ENCODE measurements at regions of chr6 and their contacts with region 1.

Region 1: GRCh38 chr6:153231048-153231646 is 100.1 kb upstream of the RGS17 start:
- DNase-seq: peak in 1 of 9 donors; percentile 23
- ATAC-seq: peak; percentile 26
- H3K4me3 ChIP-seq: no peak overlapping the region
- H3K4me3 Mint-ChIP-seq: no peak overlapping the region
- H3K27ac ChIP-seq: no peak overlapping the region
- H3K27ac Mint-ChIP-seq: no peak overlapping the region
- H3K4me1 ChIP-seq: no peaks in the 10 kb centered on the region
- H3K4me1 Mint-ChIP-seq: no peaks in the 10 kb centered on the region
- H3K27me3 ChIP-seq: no peaks in the 10 kb centered on the region
- H3K27me3 Mint-ChIP-seq: peaks cover 0 to 6% (median 3%) of the 10 kb centered on the region in 5 donors

Region 2: DNA sequence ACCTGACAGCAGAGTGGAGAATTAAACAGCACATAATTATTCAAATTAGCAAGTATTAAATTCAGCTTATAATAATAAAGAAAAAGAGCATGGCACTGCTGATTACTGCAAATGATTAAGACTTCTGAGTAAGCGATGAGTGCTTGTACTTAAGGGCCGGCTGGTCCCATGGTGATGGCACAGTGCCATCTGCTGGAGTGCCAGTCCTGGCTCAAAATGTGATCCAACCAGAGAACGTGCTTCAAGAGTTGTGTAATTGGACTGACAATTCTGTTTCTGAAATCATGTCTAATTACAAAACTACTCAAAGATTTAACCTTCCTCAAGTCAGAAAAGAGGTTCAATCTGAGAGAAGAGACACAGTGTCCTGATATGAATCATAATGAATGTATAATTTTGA is 81.5 kb after region 1 on chr6:
- CTCF ChIA-PET with region 1: no interaction called
- POLR2A ChIA-PET with region 1: no interaction called
- intact Hi-C with region 1: loop called in 1 of 2 experiments (anchors 1 kb)
- DNase-seq: peak in 3 of 9 donors; percentile 2 to 36 (median 13)
- ATAC-seq: peak; percentile 45
- H3K4me3 ChIP-seq: no peak overlapping the region
- H3K4me3 Mint-ChIP-seq: no peak overlapping the region
- H3K27ac ChIP-seq: no peak overlapping the region
- H3K27ac Mint-ChIP-seq: no peak overlapping the region
- H3K4me1 ChIP-seq: no peaks in the 10 kb centered on the region
- H3K4me1 Mint-ChIP-seq: peaks cover 0 to 7% (median 0%) of the 10 kb centered on the region in 7 donors
- H3K27me3 ChIP-seq: no peaks in the 10 kb centered on the region
- H3K27me3 Mint-ChIP-seq: peaks cover 0 to 8% (median 4%) of the 10 kb centered on the region in 5 donors

Region 3: GRCh38 chr6:153511896-153512496 is 280.8 kb after region 1 on chr6:
- CTCF ChIA-PET with region 1: no interaction called
- POLR2A ChIA-PET with region 1: no interaction called
- intact Hi-C with region 1: loop called in 1 of 2 experiments (anchors 5 kb)
- DNase-seq: peak in 5 of 9 donors; percentile 1 to 27 (median 16)
- ATAC-seq: peak; percentile 49
- H3K4me3 ChIP-seq: no peak overlapping the region
- H3K4me3 Mint-ChIP-seq: peak overlapping the region in 1 of 10 donors; percentile 24
- H3K27ac ChIP-seq: no peak overlapping the region
- H3K27ac Mint-ChIP-seq: peak overlapping the region in 1 of 9 donors; percentile 49
- H3K4me1 ChIP-seq: no peaks in the 10 kb centered on the region
- H3K4me1 Mint-ChIP-seq: peaks cover 0 to 7% (median 2%) of the 10 kb centered on the region in 7 donors
- H3K27me3 ChIP-seq: no peaks in the 10 kb centered on the region
- H3K27me3 Mint-ChIP-seq: no peaks in the 10 kb centered on the region

Region 4: DNA sequence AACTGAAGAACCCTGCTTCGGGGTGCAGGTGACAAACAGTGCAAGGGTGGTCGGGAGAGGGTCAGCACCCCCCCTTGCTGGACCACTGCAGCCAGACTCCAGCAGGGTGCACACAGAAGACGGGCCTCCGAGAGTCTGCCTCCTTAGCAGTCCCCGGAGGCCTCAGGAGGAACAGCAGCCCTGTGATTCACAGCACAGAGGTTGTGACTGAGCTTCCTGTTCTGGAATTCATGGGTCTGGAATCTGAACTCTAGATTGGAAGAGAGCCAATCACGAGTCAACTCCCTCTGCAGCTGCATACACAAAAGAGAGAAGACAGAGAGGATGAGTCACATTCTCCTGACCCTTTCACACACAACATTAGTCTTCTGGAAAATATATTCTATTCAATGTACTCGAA is 558.9 kb after region 1 on chr6:
- CTCF ChIA-PET with region 1: no interaction called
- POLR2A ChIA-PET with region 1: no interaction called
- intact Hi-C with region 1: loop called in 1 of 2 experiments (anchors 2 kb)
- DNase-seq: no peak
- ATAC-seq: no peak
- H3K4me3 ChIP-seq: no peak overlapping the region
- H3K4me3 Mint-ChIP-seq: no peak overlapping the region
- H3K27ac ChIP-seq: no peak overlapping the region
- H3K27ac Mint-ChIP-seq: no peak overlapping the region
- H3K4me1 ChIP-seq: no peaks in the 10 kb centered on the region
- H3K4me1 Mint-ChIP-seq: no peaks in the 10 kb centered on the region
- H3K27me3 ChIP-seq: no peaks in the 10 kb centered on the region
- H3K27me3 Mint-ChIP-seq: peaks cover 0 to 10% (median 0%) of the 10 kb centered on the region in 5 donors

Region 5: DNA sequence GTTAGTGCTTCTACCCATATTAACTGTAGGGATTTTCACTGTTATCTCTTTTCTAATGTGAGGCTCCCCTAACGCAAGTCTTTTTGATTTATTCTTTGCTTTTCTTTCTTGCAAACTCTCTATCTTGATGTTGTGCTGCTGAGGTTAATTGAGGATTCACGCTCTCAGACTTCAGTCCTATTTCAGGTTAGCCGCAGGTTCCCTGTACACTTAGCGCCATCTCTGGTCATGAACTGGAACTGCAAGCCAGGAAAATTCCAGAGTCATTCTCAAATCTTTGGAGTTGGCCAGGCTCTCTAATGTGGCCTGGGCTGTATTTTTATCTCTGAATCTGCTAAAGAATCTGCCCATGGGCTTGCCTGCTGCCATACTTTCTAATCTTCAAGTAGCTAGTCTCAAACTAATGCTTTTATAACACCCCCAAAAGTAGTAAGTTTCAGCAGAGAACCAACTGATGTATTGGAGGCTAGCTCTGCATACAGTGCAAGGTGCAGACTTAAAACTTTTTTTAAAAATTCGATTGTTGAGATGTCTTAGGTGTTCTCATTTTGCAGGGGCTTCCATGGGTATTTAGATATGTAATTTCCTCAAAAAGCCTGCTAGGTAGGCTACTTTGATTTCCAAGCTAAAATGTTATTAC is 716.8 kb after region 1 on chr6:
- CTCF ChIA-PET with region 1: no interaction called
- POLR2A ChIA-PET with region 1: no interaction called
- intact Hi-C with region 1: loop called in 1 of 2 experiments (anchors 2 kb)
- DNase-seq: peak in 3 of 9 donors; percentile 3 to 9 (median 3)
- ATAC-seq: no peak
- H3K4me3 ChIP-seq: no peak overlapping the region
- H3K4me3 Mint-ChIP-seq: no peak overlapping the region
- H3K27ac ChIP-seq: no peak overlapping the region
- H3K27ac Mint-ChIP-seq: no peak overlapping the region
- H3K4me1 ChIP-seq: no peaks in the 10 kb centered on the region
- H3K4me1 Mint-ChIP-seq: peaks cover 0 to 5% (median 0%) of the 10 kb centered on the region in 7 donors
- H3K27me3 ChIP-seq: no peaks in the 10 kb centered on the region
- H3K27me3 Mint-ChIP-seq: peaks cover 0 to 15% (median 8%) of the 10 kb centered on the region in 5 donors

Measured in naive thymus-derived CD4-positive, alpha-beta T cell (primary cell).